H1 (cell line): ENCODE measurements at regions of chr5 and their contacts with region 1.

Region 1: GRCh38 chr5:122415030-122415800 is 103.2 kb downstream of the SNCAIP start:
- DNase-seq: peak; percentile 54 to 60
- H3K4me3 ChIP-seq: no peak overlapping the region
- H3K27ac ChIP-seq: no peak overlapping the region
- H3K4me1 ChIP-seq: peaks cover 0 to 2% (median 1%) of the 10 kb centered on the region in 4 experiments; a peak in 2 of 7 replicates
- H3K27me3 ChIP-seq: no peaks in the 10 kb centered on the region
- CTCF ChIP-seq: peak; percentile 82 to 92 (median 88)
- EP300 ChIP-seq: no peak
- POLR2A ChIP-seq: no peak
- RAD21 ChIP-seq: peak; percentile 93 to 94

Region 2: GRCh38 chr5:122401976-122402725 is 13.1 kb before region 1 on chr5:
- CTCF ChIA-PET with region 1: interaction called, 21 read pairs
- POLR2A ChIA-PET with region 1: no interaction called
- DNase-seq: no peak
- H3K4me3 ChIP-seq: no peak overlapping the region
- H3K27ac ChIP-seq: no peak overlapping the region
- H3K4me1 ChIP-seq: peaks cover 0 to 6% (median 2%) of the 10 kb centered on the region in 4 experiments; a peak in 2 of 7 replicates
- H3K27me3 ChIP-seq: no peaks in the 10 kb centered on the region
- CTCF ChIP-seq: no peak
- EP300 ChIP-seq: no peak
- POLR2A ChIP-seq: no peak
- RAD21 ChIP-seq: no peak

Region 3: DNA sequence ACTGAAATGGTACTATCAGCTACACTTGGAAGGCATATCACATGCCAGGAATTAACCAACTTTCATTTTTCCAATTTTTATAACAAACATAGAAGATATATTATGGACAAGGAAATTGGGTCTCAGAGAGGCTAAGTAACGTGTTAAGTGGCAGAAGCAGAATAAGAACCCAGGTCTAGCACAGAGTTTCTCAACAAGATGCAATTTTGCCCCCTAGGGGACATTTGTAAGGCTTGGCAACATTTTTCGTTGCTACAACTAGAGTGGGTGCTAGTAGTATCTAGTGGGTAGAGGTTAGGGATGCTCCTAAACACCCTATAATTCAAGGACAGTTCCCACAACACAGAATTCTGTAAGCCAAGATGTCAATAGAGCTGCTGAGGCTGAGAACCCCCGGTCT is 77.4 kb after region 1 on chr5:
- CTCF ChIA-PET with region 1: interaction called, 17 read pairs
- POLR2A ChIA-PET with region 1: no interaction called
- DNase-seq: no peak
- H3K4me3 ChIP-seq: no peak overlapping the region
- H3K27ac ChIP-seq: no peak overlapping the region
- H3K4me1 ChIP-seq: peaks cover 0 to 4% (median under 1%) of the 10 kb centered on the region in 4 experiments; a peak in 2 of 7 replicates
- H3K27me3 ChIP-seq: no peaks in the 10 kb centered on the region
- CTCF ChIP-seq: peak in 2 of 3 experiments; percentile 57 to 67; a peak in 3 of 4 replicates
- EP300 ChIP-seq: no peak
- POLR2A ChIP-seq: no peak
- RAD21 ChIP-seq: peak; percentile 75 to 83